Ascending aorta (tissue), 2 donors: ENCODE measurements at regions of chr5 and their contacts with region 1.

Region 1: DNA sequence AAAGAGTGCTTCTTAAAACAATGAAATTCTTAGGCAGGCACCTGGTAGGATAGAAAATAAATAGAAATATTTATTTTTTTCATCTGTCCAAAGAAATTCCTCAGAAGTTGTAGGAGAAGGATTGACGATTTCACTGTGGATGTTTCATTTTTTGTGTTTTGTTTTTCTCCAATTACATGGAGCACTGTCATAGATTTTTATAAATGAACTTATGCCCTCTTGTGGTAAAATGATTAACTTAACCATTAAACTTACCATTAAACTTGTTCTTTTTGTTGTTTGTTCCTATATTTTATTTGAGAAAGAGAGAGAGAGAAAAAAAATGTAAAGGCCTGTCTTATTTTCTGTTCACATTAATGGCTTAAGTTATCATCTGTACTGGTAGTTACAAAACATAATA is 339.2 kb downstream of the PRR16 start:
- DNase-seq: no peak
- H3K4me3 ChIP-seq: no peak overlapping the region
- H3K27ac ChIP-seq: no peak overlapping the region
- H3K4me1 ChIP-seq: no peaks in the 10 kb centered on the region
- H3K27me3 ChIP-seq: no peaks in the 10 kb centered on the region
- CTCF ChIP-seq: peak in 2 of 3 experiments; percentile 19 to 38

Region 2: GRCh38 chr5:119470851-119471451 is 1332.3 kb before region 1 on chr5:
- intact Hi-C with region 1: loop called (anchors 2 kb)
- DNase-seq: no peak
- H3K4me3 ChIP-seq: no peak overlapping the region
- H3K27ac ChIP-seq: no peak overlapping the region
- H3K4me1 ChIP-seq: no peaks in the 10 kb centered on the region
- H3K27me3 ChIP-seq: no peaks in the 10 kb centered on the region
- CTCF ChIP-seq: peak; percentile 35 to 72 (median 58)

Region 3: GRCh38 chr5:119943148-119943547 is 860.1 kb before region 1 on chr5:
- intact Hi-C with region 1: loop called (anchors 10 kb)
- DNase-seq: no peak
- H3K4me3 ChIP-seq: no peak overlapping the region
- H3K27ac ChIP-seq: no peak overlapping the region
- H3K4me1 ChIP-seq: no peaks in the 10 kb centered on the region
- H3K27me3 ChIP-seq: no peaks in the 10 kb centered on the region
- CTCF ChIP-seq: peak in 1 of 3 experiments; percentile 36

Region 4: GRCh38 chr5:121182788-121183490 is 379.7 kb after region 1 on chr5:
- intact Hi-C with region 1: no loop called
- DNase-seq: no peak
- H3K4me3 ChIP-seq: no peak overlapping the region
- H3K27ac ChIP-seq: no peak overlapping the region
- H3K4me1 ChIP-seq: no peaks in the 10 kb centered on the region
- H3K27me3 ChIP-seq: no peaks in the 10 kb centered on the region
- CTCF ChIP-seq: no peak